Endothelial cell of umbilical vein (primary cell): ENCODE measurements at regions of chr11 and their contacts with region 1.

Region 1: DNA sequence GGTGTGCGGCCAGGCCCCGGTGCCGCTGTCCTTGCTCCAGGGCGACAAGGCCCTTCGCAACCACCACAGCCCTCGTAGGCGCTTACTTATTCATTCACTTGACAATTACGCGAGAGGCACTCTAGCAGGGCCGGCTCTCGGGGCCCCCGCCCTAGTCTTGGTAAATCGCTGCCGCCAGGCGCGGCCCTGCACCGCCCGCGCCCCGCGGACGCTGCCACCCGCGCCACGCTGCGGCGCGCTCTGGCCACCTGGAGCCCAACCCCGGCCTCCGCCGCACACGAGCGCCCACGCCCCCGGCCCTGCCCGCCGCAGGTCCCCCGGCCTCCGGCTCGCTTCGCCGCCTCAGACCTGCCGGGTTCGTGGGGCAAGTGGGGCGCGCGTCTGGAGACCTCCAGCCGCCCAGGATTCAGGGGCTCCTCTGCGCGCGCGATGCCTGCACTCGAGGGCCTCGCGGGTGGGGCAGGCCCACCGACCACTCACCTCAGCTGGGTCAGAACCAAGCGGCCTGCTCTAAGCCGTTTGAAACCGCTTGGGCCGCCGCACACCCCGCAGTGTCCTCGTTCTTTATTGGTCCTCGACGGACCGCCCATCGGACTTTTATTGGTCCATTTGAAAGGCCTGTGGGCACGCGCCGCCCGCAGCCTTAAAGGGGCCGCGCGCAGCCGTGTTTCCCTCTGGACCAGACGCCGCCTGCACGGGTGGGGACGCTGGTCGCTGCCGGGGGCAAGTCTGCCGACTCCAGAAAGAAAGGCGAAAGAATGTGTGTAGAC is at the start of gene CKAP5:
- DNase-seq: peak; percentile 94
- H3K4me3 ChIP-seq: peak within 1 kb of the TSS; percentile 95 to 99 (median 96)
- H3K27ac ChIP-seq: peak within 1 kb of the TSS; percentile 45
- H3K4me1 ChIP-seq: peaks cover 22% of the 10 kb centered on the region
- H3K27me3 ChIP-seq: no peaks in the 10 kb centered on the region
- CTCF ChIP-seq: no peak
- POLR2A ChIP-seq: peak; percentile 78
- total RNA-seq, gene CKAP5: 138 and 140 TPM in 2 replicates

Region 2: GRCh38 chr11:46618837-46619236 is 227.1 kb before region 1 on chr11:
- CTCF ChIA-PET with region 1: no interaction called
- POLR2A ChIA-PET with region 1: no interaction called
- dilution Hi-C with region 1: no loop called
- intact Hi-C with region 1: no loop called
- DNase-seq: no peak
- H3K4me3 ChIP-seq: peak overlapping the region in 1 of 3 experiments; percentile 2
- H3K27ac ChIP-seq: no peak overlapping the region
- H3K4me1 ChIP-seq: peaks cover 19% of the 10 kb centered on the region
- H3K27me3 ChIP-seq: no peaks in the 10 kb centered on the region
- CTCF ChIP-seq: no peak
- POLR2A ChIP-seq: no peak

Region 3: GRCh38 chr11:46826310-46827044 is 19.4 kb before region 1 on chr11:
- CTCF ChIA-PET with region 1: interaction called, 6 read pairs
- POLR2A ChIA-PET with region 1: interaction called, 4 read pairs
- dilution Hi-C with region 1: no loop called
- intact Hi-C with region 1: loop called (anchors 1 kb)
- DNase-seq: peak; percentile 86
- H3K4me3 ChIP-seq: peak overlapping the region; percentile 12 to 68 (median 45)
- H3K27ac ChIP-seq: peak overlapping the region; percentile 26
- H3K4me1 ChIP-seq: peaks cover 11% of the 10 kb centered on the region
- H3K27me3 ChIP-seq: no peaks in the 10 kb centered on the region
- CTCF ChIP-seq: no peak
- POLR2A ChIP-seq: no peak